Uterus (tissue), 4 donors: ENCODE measurements at regions of chr13 and their contacts with region 1.

Region 1: DNA sequence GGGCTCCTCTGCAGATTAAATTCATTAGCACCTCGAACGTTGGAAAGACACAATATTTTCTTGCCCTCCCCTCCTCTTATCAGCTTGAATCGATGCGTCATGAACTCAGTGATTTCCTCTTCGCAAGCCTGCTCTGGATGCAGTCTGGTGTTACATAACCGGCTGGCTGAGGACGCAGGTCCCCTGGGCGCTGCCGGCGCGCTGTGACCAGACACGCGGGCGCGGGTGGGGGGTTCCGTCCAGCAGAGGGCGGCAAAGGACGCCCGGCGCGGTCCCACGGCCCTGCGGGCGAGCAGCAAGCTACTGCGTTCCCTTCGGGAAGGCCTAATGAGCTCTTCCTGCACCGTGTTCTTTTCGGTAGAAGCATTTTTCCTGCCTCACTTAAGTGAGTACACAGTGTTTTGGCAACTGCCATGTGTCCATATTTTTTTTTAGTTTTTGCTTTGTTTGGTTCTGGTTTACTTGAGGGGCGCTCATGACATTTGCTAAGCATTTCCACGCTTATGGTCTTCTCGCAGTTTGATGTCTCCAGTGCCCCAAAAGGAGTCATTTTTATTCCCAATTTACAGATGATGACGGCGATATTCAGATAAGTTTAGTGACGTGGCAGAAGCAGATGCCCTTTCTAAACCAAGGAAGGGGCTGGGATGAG is 112.2 kb upstream of the MBNL2 start:
- DNase-seq: peak; percentile 87 to 95
- H3K4me3 ChIP-seq: peak overlapping the region in 1 of 2 donors; percentile 5
- H3K27ac ChIP-seq: peak overlapping the region; percentile 52 to 66
- H3K4me1 ChIP-seq: peaks cover 0 to 4% of the 10 kb centered on the region in 2 donors
- H3K27me3 ChIP-seq: no peaks in the 10 kb centered on the region
- CTCF ChIP-seq: peak; percentile 97 to 100 (median 97)
- POLR2A ChIP-seq: peak in 1 of 2 donors; percentile 35

Region 2: GRCh38 chr13:96984051-96984508 is 125.9 kb before region 1 on chr13:
- intact Hi-C with region 1: no loop called
- DNase-seq: peak in 1 of 2 donors; percentile 45
- H3K4me3 ChIP-seq: no peak overlapping the region
- H3K27ac ChIP-seq: peak overlapping the region; percentile 24 to 43
- H3K4me1 ChIP-seq: no peaks in the 10 kb centered on the region
- H3K27me3 ChIP-seq: no peaks in the 10 kb centered on the region
- CTCF ChIP-seq: peak; percentile 5 to 32 (median 11)
- POLR2A ChIP-seq: no peak

Region 3: GRCh38 chr13:97212601-97213040 is 102.7 kb after region 1 on chr13:
- intact Hi-C with region 1: loop called (anchors 10 kb)
- DNase-seq: no peak
- H3K4me3 ChIP-seq: no peak overlapping the region
- H3K27ac ChIP-seq: no peak overlapping the region
- H3K4me1 ChIP-seq: no peaks in the 10 kb centered on the region
- H3K27me3 ChIP-seq: no peaks in the 10 kb centered on the region
- CTCF ChIP-seq: peak in 2 of 4 experiments; percentile 15 to 22
- POLR2A ChIP-seq: no peak

Region 4: DNA sequence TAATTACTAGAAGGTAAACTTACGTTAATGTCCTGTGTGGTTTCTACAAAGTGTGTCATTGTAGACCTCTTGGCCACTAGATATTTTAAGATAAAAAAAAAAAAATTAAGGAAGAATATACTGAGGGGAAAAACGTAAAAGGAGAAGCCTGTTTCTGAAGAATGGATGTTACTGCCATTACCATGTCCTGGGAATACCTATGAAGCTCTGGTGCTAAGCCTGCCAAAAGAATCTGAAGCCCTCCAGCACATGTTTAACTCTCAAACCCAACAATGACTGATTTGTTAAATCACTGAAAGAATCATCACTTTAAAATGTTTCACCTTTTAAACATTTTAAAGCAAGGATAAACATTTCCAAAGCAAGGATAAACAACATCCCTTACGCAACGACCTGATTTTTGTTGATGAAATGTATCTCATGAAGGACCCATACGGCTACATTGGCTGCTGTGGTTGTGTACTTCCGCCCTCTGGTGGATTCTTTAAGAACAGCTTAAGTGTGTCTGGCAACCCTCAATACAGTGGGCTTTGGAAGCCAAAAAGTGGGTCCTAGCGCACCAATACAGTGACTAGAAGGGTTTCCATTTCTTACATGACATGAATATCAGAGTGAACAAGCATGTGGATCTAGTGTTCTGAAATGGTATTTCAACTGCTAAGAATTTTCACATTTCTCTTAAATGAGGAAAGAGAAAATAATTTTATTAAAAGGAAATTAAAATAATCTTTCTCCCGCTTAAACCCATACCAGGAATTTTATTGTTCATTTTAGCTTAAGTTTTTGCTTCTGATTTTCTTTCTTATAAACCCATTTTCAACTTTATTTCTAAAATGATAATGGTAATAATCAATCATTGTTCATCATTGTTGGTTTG is 249.5 kb after region 1 on chr13:
- intact Hi-C with region 1: loop called (anchors 5 kb)
- DNase-seq: peak; percentile 42 to 65
- H3K4me3 ChIP-seq: no peak overlapping the region
- H3K27ac ChIP-seq: peak overlapping the region; percentile 51 to 64
- H3K4me1 ChIP-seq: no peaks in the 10 kb centered on the region
- H3K27me3 ChIP-seq: no peaks in the 10 kb centered on the region
- CTCF ChIP-seq: peak; percentile 85 to 90 (median 86)
- POLR2A ChIP-seq: no peak